ENCODE measurements at regions of chr19 and their contacts with region 1.

Region 1: GRCh38 chr19:36054119-36054732 is at the start of gene THAP8:
- DNase-seq: peak; percentile 98
- ATAC-seq: peak; percentile 90
- H3K4me3 Mint-ChIP-seq: peak within 1 kb of the TSS; percentile 100
- H3K27ac Mint-ChIP-seq: peak within 1 kb of the TSS; percentile 98
- H3K4me1 Mint-ChIP-seq: peaks cover 26% of the 10 kb centered on the region
- H3K27me3 Mint-ChIP-seq: no peaks in the 10 kb centered on the region
- total RNA-seq, gene THAP8: 6.4 to 6.7 TPM

Region 2: GRCh38 chr19:35949131-35949530 is 105.1 kb before region 1 on chr19:
- POLR2A ChIA-PET with region 1: interaction called, 16 read pairs
- DNase-seq: no peak
- ATAC-seq: no peak
- H3K4me3 Mint-ChIP-seq: no peak overlapping the region
- H3K27ac Mint-ChIP-seq: peak overlapping the region; percentile 26
- H3K4me1 Mint-ChIP-seq: peaks cover 21% of the 10 kb centered on the region
- H3K27me3 Mint-ChIP-seq: no peaks in the 10 kb centered on the region

Region 3: DNA sequence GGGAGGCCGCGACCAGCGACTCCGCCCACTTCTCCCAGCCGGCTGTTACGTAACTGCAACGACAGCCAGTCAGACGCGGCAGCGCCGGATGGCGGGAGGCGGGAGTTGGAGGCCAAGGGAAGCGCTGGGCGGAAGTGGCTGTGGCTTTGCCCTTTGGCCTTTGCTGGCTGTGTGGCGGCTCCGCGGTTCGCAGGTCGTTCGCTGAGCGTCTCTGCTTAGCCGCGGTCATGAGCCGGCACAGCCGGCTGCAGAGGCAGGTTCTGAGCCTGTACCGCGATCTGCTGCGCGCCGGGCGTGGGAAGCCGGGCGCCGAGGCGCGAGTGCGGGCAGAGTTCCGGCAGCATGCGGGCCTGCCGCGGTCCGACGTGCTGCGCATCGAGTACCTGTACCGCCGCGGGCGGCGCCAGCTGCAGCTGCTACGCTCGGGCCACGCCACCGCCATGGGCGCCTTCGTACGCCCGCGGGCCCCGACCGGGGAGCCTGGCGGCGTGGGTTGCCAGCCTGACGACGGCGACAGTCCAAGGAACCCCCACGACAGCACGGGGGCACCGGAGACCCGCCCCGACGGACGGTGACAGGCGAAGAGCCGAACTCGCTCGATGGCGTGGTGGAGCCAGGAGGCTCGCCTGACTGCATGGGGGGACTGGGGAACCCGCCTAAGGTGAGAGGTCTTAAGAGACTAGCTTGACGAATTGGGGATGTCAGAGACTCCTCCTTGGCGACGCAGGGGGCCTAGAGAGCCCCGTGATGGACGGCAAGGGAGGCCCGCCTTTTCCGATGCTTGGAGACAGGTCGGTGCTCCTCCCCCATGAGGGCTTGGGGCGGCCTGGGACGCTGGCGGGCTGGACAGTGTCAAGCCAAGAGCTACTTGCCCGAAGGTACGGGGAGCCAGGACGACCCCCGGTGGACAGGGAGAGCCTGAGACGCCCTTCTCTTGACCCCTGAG is 58.9 kb before region 1 on chr19 and contains the start of gene SDHAF1:
- POLR2A ChIA-PET with region 1: interaction called, 15 read pairs
- DNase-seq: peak; percentile 92
- ATAC-seq: peak; percentile 84
- H3K4me3 Mint-ChIP-seq: peak within 1 kb of the TSS; percentile 94
- H3K27ac Mint-ChIP-seq: peak within 1 kb of the TSS; percentile 95
- H3K4me1 Mint-ChIP-seq: peaks cover 24% of the 10 kb centered on the region
- H3K27me3 Mint-ChIP-seq: no peaks in the 10 kb centered on the region
- total RNA-seq, gene SDHAF1: 22.2 to 22.8 TPM

Region 4: DNA sequence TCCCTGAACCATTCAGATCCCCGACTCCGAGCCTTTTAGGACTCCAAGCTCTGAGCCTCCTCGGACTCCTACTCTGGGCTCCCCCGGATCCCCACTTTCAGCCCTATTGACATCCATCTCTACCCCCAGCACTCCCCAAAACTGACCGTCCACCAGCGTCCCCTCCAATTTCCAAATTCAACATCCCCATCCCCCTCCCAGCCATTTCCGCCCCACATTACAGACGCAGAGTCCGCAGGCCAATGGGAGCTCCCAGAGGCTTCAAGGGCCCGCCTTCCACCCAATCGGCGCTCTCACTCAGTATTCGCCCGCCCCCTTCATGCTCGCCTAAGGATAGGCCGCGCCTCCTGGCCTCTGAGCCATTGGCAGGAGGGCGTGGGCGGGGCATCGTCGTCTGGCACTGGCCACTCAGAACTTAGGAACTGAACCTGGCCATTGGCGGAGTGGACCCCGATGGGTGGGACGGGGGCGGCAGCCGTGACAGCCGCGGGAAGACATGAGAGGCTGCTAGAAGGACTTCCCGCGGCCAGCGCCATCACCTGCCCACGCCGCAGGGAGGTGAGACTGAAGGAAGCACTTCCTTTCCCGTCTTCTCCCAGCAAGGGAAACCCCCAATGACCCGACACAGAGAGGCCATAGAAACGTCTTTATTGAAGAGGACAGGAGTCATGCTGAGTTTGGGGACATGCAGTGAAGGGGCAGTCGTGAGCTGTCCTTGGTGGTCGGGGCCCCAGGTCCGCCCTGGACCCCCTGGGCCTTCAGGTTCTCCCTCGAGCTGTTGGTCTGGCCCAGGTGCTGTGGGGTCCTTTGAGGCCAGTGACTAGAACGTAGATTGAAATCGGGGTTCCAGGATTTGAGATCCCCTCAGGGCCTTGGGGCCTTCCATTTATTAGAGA is 39.9 kb before region 1 on chr19 and contains the start of gene ALKBH6:
- POLR2A ChIA-PET with region 1: interaction called, 11 read pairs
- DNase-seq: peak; percentile 98
- ATAC-seq: peak; percentile 97
- H3K4me3 Mint-ChIP-seq: peak within 1 kb of the TSS; percentile 92
- H3K27ac Mint-ChIP-seq: peak within 1 kb of the TSS; percentile 93
- H3K4me1 Mint-ChIP-seq: peaks cover 35% of the 10 kb centered on the region
- H3K27me3 Mint-ChIP-seq: no peaks in the 10 kb centered on the region
- total RNA-seq, gene ALKBH6: 56.4 to 61.1 TPM

Region 5: DNA sequence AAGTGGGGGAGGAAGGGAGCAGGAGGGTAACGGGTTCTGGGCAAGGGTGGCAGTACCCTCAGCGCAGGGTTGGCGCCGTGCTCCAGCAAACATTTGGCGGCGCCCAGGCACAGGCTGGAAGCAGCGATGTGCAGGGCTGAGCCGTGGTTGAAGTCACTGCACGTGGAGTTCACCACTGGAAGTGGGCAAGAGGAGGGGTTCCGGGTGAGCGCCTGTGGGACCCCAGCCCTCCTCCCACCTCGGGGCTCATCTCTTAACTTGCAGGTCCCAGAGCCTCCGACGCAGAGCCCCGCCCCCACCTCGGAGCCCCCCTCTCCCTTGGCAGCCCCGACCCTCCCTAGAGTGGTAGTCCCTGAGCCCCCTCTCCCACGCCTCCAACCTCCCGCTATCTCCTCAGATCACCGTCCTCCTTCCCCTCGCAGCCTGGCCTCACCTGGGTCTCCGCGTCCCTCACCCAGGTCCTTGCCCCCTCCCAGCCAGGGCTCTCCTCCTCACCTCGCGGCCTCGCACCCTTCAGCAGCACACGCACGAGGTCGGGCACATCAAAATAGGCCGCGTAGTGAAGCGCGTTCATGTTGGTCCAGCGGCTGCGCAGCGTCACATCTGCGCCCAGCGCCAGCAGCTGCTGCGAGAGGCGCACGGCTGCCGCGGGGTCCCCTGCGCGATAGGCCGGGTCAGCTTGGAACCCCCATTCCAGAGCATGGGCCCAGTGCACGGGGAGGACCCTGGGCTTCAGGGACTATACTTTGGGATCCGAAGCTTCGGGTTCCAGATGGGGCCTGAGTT is 27.9 kb before region 1 on chr19:
- POLR2A ChIA-PET with region 1: no interaction called
- DNase-seq: no peak
- ATAC-seq: no peak
- H3K4me3 Mint-ChIP-seq: no peak overlapping the region
- H3K27ac Mint-ChIP-seq: no peak overlapping the region
- H3K4me1 Mint-ChIP-seq: no peaks in the 10 kb centered on the region
- H3K27me3 Mint-ChIP-seq: no peaks in the 10 kb centered on the region

Region 6: DNA sequence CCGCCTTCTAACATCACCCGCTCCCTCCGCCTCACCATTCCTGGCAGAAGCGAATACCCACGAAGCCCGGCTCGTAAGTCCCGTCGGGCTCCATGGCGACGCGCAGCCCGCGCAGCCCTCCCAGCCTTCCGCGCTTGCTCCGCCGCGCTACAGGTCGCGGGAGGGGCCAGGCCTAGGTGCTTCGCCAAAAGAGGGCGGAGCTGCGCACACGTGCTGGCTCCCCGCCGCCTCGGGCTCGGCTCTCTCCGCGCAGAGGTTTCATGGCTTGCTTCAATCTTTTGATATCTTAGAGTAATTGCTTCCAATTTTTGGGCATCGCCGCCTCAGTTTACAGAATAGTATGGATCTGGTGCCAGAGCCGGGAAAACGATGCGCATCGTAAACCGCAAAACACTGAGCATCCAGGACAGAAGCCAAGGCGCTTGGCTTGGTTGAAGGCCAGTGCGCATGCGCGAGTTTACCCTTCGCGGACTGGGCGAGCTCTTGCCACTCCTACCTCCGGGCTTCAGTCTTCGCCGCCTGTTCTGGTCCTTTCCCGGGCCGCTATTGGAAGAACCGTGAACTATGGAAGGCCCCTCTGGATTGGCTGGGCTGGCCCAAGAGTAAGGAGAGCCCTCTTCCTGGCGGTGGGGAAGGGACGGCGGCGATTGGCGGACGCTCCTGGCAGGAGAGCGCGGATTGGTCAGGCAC is 60.7 kb after region 1 on chr19 and contains the start of gene POLR2I:
- POLR2A ChIA-PET with region 1: interaction called, 11 read pairs
- DNase-seq: peak; percentile 97
- ATAC-seq: peak; percentile 95
- H3K4me3 Mint-ChIP-seq: peak within 1 kb of the TSS; percentile 98
- H3K27ac Mint-ChIP-seq: peak within 1 kb of the TSS; percentile 98
- H3K4me1 Mint-ChIP-seq: peaks cover 29% of the 10 kb centered on the region
- H3K27me3 Mint-ChIP-seq: no peaks in the 10 kb centered on the region
- total RNA-seq, gene POLR2I: 46.1 to 49.8 TPM

Measured in activated naive CD8-positive, alpha-beta T cell treated with anti-CD3 and anti-CD28 coated beads, Interleukin-2, amount 10 ng/mL, durations not matched to agents 7 days and 5 days (primary cell).